ENCODE measurements at regions of chr3 and their contacts with region 1.

Region 1: GRCh38 chr3:165642761-165643432 is 194.3 kb downstream of the BCHE start:
- DNase-seq: peak; percentile 91
- H3K4me3 Mint-ChIP-seq: peak overlapping the region; percentile 26
- H3K27ac Mint-ChIP-seq: peak overlapping the region; percentile 98
- H3K4me1 Mint-ChIP-seq: peaks cover 38% of the 10 kb centered on the region
- H3K27me3 Mint-ChIP-seq: no peaks in the 10 kb centered on the region
- CTCF ChIP-seq: no peak

Region 2: DNA sequence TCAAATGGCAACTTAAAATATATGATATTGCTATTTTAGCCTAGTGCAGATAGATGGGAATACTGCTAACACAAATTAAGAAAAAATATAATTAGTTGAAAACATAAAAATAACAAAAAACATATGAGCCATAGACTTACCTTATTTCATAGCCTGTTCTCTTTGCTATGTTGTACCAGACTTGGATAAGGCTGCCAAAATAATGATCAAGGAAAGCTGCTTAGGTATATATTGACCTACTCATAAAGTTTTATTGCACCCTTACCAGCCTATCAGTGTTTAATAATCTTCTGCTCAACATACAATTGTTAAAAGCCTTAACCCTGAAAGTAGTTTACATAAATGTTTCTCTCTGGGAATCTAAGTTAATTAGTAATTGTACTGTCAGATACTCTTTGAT is 564.6 kb before region 1 on chr3 and contains the start of gene SI:
- CTCF ChIA-PET with region 1: no interaction called
- intact Hi-C with region 1: no loop called
- DNase-seq: no peak
- H3K4me3 Mint-ChIP-seq: no peak within 1 kb of the TSS
- H3K27ac Mint-ChIP-seq: no peak within 1 kb of the TSS
- H3K4me1 Mint-ChIP-seq: no peaks in the 10 kb centered on the region
- H3K27me3 Mint-ChIP-seq: no peaks in the 10 kb centered on the region
- CTCF ChIP-seq: no peak
- total RNA-seq, gene SI: not detected in 2 replicates

Region 3: GRCh38 chr3:165464736-165465135 is 178.2 kb before region 1 on chr3:
- CTCF ChIA-PET with region 1: no interaction called
- intact Hi-C with region 1: loop called (anchors 5 kb)
- DNase-seq: no peak
- H3K4me3 Mint-ChIP-seq: no peak overlapping the region
- H3K27ac Mint-ChIP-seq: no peak overlapping the region
- H3K4me1 Mint-ChIP-seq: peaks cover 18% of the 10 kb centered on the region
- H3K27me3 Mint-ChIP-seq: no peaks in the 10 kb centered on the region
- CTCF ChIP-seq: no peak

Region 4: DNA sequence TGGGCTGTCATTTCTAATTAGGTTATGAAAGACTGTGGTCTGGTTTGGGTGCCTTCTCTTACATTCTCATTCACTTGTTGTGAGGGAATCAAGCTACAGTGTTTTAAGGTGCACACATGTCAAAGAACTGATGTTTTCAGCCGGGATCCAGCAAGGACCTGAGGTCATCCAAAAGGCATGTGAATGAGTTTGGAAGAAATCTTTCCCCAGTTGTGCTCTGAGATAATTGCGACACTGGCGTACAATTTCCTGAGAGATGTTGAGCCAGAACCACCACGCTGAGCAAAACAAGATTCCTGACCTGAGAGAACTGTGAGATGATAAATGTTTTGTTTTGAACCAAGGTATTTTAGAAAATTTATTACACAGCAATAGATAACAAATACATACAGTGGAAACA is 151.4 kb before region 1 on chr3:
- CTCF ChIA-PET with region 1: no interaction called
- intact Hi-C with region 1: no loop called
- DNase-seq: no peak
- H3K4me3 Mint-ChIP-seq: no peak overlapping the region
- H3K27ac Mint-ChIP-seq: no peak overlapping the region
- H3K4me1 Mint-ChIP-seq: no peaks in the 10 kb centered on the region
- H3K27me3 Mint-ChIP-seq: no peaks in the 10 kb centered on the region
- CTCF ChIP-seq: no peak

Region 5: DNA sequence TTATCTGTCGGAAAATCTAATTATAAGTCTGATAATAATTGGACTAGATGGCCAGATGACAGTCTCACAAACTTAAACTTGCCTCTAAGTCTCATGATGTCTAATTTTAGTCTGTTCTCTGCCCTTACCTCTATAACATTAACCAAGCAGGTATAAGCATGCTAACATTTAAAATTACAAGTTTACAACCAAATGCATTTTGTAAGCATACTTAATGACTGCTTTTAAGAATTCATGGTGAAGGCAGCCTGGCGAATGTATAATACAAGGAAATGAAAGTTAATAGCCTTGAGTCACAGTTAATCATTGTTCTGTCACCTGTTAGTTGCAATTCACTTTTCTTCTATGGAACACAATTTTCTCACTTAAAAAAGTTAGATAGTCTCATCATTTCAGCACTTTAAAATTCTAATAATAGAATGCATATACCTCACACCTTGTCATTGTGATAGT is 177.8 kb after region 1 on chr3:
- CTCF ChIA-PET with region 1: no interaction called
- intact Hi-C with region 1: no loop called
- DNase-seq: no peak
- H3K4me3 Mint-ChIP-seq: no peak overlapping the region
- H3K27ac Mint-ChIP-seq: peak overlapping the region; percentile 57
- H3K4me1 Mint-ChIP-seq: peaks cover 9% of the 10 kb centered on the region
- H3K27me3 Mint-ChIP-seq: no peaks in the 10 kb centered on the region
- CTCF ChIP-seq: no peak

Region 6: GRCh38 chr3:165830740-165831139 is 187.8 kb after region 1 on chr3:
- CTCF ChIA-PET with region 1: no interaction called
- intact Hi-C with region 1: loop called (anchors 5 kb)
- DNase-seq: no peak
- H3K4me3 Mint-ChIP-seq: no peak overlapping the region
- H3K27ac Mint-ChIP-seq: no peak overlapping the region
- H3K4me1 Mint-ChIP-seq: no peaks in the 10 kb centered on the region
- H3K27me3 Mint-ChIP-seq: no peaks in the 10 kb centered on the region
- CTCF ChIP-seq: no peak

Region 7: GRCh38 chr3:166554023-166554422 is 911.1 kb after region 1 on chr3:
- CTCF ChIA-PET with region 1: no interaction called
- intact Hi-C with region 1: no loop called
- DNase-seq: no peak
- H3K4me3 Mint-ChIP-seq: no peak overlapping the region
- H3K27ac Mint-ChIP-seq: no peak overlapping the region
- H3K4me1 Mint-ChIP-seq: no peaks in the 10 kb centered on the region
- H3K27me3 Mint-ChIP-seq: no peaks in the 10 kb centered on the region
- CTCF ChIP-seq: no peak